Mammary epithelial cell (primary cell): ENCODE measurements at regions of chr3 and their contacts with region 1.

Region 1: GRCh38 chr3:123907720-123908119 is 23.6 kb upstream of the MYLK start:
- DNase-seq: no peak
- H3K4me3 ChIP-seq: no peak overlapping the region
- H3K27ac ChIP-seq: no peak overlapping the region
- H3K4me1 ChIP-seq: no peaks in the 10 kb centered on the region
- H3K27me3 ChIP-seq: no peaks in the 10 kb centered on the region
- CTCF ChIP-seq: no peak

Region 2: DNA sequence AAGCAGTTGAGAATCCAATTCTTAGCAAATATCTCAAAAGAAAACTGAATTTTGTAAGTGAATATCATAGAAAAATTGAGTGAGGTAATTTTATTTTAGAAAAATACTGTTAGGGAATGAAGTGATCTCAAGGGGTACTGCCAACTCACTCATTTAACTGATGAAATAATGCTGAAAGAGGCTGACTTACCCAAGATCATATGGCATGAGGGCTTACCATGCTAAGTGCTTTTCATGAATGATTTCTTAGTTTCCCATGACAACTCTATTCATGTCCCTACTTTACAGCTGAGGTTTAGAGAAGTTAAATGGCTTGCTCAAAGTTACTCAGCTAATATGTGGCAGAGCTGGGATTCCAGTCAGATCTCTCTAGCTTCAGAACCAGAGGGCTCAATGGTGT is 22.7 kb after region 1 on chr3:
- CTCF ChIA-PET with region 1: interaction called, 11 read pairs
- dilution Hi-C with region 1: no loop called
- in situ Hi-C with region 1: no loop called
- intact Hi-C with region 1: no loop called
- DNase-seq: no peak
- H3K4me3 ChIP-seq: no peak overlapping the region
- H3K27ac ChIP-seq: no peak overlapping the region
- H3K4me1 ChIP-seq: no peaks in the 10 kb centered on the region
- H3K27me3 ChIP-seq: no peaks in the 10 kb centered on the region
- CTCF ChIP-seq: no peak